ENCODE measurements at regions of chr9 and their contacts with region 1.

Region 1: DNA sequence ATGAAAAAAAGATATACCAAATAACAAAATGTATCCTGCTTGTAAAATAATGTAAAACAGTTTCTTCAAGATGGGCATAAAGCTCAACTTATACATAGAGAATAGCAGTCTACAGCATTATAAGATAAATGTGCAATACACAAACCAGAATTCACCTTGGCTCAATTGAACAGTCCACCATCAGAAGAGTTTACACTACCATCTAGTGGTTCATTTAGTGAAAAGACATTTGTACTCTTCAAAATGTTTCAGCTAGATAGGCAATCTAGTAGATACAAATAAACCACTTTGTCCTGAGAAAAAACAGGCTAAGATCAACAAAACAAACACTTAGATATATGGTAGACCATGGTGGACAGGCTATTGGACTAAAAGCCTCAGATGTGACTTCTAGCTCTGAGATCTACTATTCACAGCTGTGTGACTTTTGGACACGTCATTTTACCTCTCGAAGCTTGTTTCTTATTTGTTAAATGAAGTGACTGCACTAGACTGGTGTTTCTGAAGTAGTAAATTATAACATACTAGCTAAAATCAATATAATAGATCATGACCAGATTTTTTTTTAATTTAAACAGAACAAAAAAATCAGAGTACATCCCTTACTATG is 22.1 kb upstream of the TPD52L3 start:
- DNase-seq: no peak
- ATAC-seq: peak; percentile 77
- H3K4me3 ChIP-seq: no peak overlapping the region
- H3K27ac ChIP-seq: no peak overlapping the region
- H3K4me1 ChIP-seq: no peaks in the 10 kb centered on the region
- H3K27me3 ChIP-seq: no peaks in the 10 kb centered on the region
- CTCF ChIP-seq: peak; percentile 34 to 89 (median 73)
- POLR2A ChIP-seq: no peak

Region 2: DNA sequence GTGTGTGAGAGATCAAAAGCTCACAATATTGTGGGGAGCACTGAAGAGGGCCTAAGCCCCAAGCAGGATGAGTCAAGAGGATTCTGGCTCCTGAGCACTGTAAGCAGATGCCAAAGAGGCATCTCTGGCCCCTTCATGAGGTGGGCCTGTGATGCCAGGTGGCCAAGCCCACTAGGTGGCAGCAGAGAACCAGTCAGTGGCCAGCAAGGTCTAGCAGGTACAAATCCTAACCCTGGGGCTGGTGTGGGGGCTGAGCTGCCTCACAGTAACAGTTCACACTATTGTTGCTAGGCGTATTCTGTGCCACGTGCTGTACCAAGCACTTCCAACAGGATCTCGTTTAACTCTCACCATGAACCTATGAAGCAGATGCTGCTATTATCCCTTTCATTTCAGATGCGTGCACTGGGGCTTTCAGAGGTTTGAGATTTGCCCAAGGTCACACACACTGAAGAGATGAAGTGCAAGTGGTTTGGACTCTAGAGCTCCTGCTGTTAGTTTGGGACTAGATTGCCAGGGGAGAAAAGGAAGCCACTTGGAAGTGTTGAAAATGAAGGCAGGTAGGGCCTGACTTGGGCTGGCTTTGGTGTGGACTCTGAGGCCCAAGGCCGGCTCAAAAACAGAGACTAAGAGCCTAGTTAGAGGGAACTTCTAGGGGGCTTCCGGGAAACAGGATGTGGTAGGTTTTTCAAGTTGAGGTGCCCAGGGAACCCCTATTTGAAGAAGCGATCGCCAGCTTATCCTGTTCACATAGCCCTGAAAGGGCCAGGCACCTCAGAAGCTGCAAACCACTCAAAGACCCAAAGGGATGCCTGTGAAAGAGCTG is 419.7 kb before region 1 on chr9:
- intact Hi-C with region 1: loop called (anchors 10 kb)
- DNase-seq: peak; percentile 75 to 86 (median 79)
- ATAC-seq: peak; percentile 86
- H3K4me3 ChIP-seq: no peak overlapping the region
- H3K27ac ChIP-seq: no peak overlapping the region
- H3K4me1 ChIP-seq: no peaks in the 10 kb centered on the region
- H3K27me3 ChIP-seq: no peaks in the 10 kb centered on the region
- CTCF ChIP-seq: peak; percentile 75 to 94 (median 87)
- POLR2A ChIP-seq: no peak

Region 3: DNA sequence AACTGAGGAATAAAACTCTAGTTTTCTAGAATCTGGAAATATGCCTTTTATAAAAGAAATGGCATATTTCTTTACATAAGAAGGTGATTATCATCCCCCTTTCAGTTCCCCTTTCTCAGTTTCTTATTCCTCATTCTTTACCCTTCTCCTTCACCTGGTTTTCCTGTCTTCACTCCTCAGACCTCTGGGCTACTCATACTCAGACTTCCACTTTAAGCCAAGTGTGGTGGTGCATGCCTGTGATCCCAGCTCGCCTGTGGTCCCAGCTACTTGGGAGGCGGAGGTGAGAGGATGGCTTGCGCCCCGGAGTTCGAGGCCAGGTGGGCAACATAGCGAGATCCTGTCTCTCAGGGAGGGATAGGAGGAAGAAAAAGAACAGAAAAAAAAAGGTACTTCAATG is 347.8 kb before region 1 on chr9:
- intact Hi-C with region 1: no loop called
- DNase-seq: no peak
- ATAC-seq: no peak
- H3K4me3 ChIP-seq: no peak overlapping the region
- H3K27ac ChIP-seq: no peak overlapping the region
- H3K4me1 ChIP-seq: peaks cover 22% of the 10 kb centered on the region
- H3K27me3 ChIP-seq: no peaks in the 10 kb centered on the region
- CTCF ChIP-seq: no peak
- POLR2A ChIP-seq: no peak

Region 4: GRCh38 chr9:6054280-6055099 is 251.6 kb before region 1 on chr9:
- intact Hi-C with region 1: loop called (anchors 5 kb)
- DNase-seq: peak; percentile 75 to 82 (median 80)
- ATAC-seq: peak; percentile 87
- H3K4me3 ChIP-seq: no peak overlapping the region
- H3K27ac ChIP-seq: no peak overlapping the region
- H3K4me1 ChIP-seq: peaks cover 5% of the 10 kb centered on the region
- H3K27me3 ChIP-seq: no peaks in the 10 kb centered on the region
- CTCF ChIP-seq: peak; percentile 64 to 77 (median 73)
- POLR2A ChIP-seq: no peak

Region 5: GRCh38 chr9:6197330-6197729 is 108.7 kb before region 1 on chr9:
- intact Hi-C with region 1: loop called (anchors 5 kb)
- DNase-seq: peak; percentile 48 to 55 (median 53)
- ATAC-seq: peak; percentile 84
- H3K4me3 ChIP-seq: no peak overlapping the region
- H3K27ac ChIP-seq: no peak overlapping the region
- H3K4me1 ChIP-seq: peaks cover 7% of the 10 kb centered on the region
- H3K27me3 ChIP-seq: no peaks in the 10 kb centered on the region
- CTCF ChIP-seq: peak; percentile 37 to 88 (median 69)
- POLR2A ChIP-seq: no peak

Region 6: GRCh38 chr9:6512085-6512657 is 206.1 kb after region 1 on chr9:
- intact Hi-C with region 1: no loop called
- DNase-seq: no peak
- ATAC-seq: no peak
- H3K4me3 ChIP-seq: no peak overlapping the region
- H3K27ac ChIP-seq: no peak overlapping the region
- H3K4me1 ChIP-seq: no peaks in the 10 kb centered on the region
- H3K27me3 ChIP-seq: no peaks in the 10 kb centered on the region
- CTCF ChIP-seq: no peak
- POLR2A ChIP-seq: no peak

Region 7: GRCh38 chr9:6777213-6777902 is 471.3 kb after region 1 on chr9:
- intact Hi-C with region 1: no loop called
- DNase-seq: no peak
- ATAC-seq: no peak
- H3K4me3 ChIP-seq: no peak overlapping the region
- H3K27ac ChIP-seq: no peak overlapping the region
- H3K4me1 ChIP-seq: peaks cover 45% of the 10 kb centered on the region
- H3K27me3 ChIP-seq: no peaks in the 10 kb centered on the region
- CTCF ChIP-seq: no peak
- POLR2A ChIP-seq: no peak

Measured in body of pancreas (tissue), 4 donors.